ENCODE measurements at regions of chr1 and their contacts with region 1.

Region 1: GRCh38 chr1:15847100-15847892 is at the start of gene SPEN:
- DNase-seq: peak; percentile 100
- total RNA-seq, gene SPEN: 59.9 to 68.5 TPM

Region 2: GRCh38 chr1:15803354-15803753 is 43.9 kb before region 1 on chr1:
- intact Hi-C with region 1: loop called in 1 of 2 experiments (anchors 10 kb)
- DNase-seq: no peak

Region 3: GRCh38 chr1:15885701-15886610 is 38.7 kb after region 1 on chr1:
- intact Hi-C with region 1: loop called in 1 of 2 experiments (anchors 5 kb)
- DNase-seq: peak; percentile 99

Region 4: GRCh38 chr1:16926491-16927073 is 1079.3 kb after region 1 on chr1:
- intact Hi-C with region 1: loop called in 1 of 2 experiments (anchors 5 kb)
- DNase-seq: no peak